GM12878 (cell line): ENCODE measurements at regions of chr13 and their contacts with region 1.

Region 1: DNA sequence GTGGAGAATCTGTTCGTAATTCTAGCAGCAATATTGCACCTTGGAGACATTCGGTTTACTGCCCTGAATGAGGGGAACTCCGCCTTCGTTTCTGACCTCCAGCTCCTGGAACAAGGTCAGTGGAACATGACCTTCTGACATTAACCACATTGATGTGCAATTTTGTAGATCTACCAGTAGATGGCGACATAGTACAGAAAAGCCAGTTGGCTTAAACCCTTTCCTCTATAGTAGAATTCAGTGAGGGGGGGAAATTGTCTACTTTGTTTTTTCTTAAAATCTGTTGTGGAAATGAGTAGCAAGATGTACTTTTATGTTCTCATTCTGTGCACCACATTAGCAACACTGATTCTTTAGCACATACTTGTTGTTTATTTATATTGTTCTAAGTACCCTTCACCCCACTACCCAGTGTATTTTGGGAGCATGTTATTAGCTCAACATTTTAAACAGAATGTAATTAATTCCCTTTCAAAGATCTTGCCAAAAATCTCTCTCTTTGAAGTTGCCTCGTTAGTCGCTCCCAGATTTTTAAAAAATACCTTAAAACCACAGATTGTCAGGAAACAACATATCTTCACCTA is 332.2 kb downstream of the MYO16 start:
- DNase-seq: peak; percentile 24
- ATAC-seq: peak; percentile 97
- H3K4me3 ChIP-seq: no peak overlapping the region
- H3K27ac ChIP-seq: no peak overlapping the region
- H3K4me1 ChIP-seq: no peaks in the 10 kb centered on the region
- H3K27me3 ChIP-seq: no peaks in the 10 kb centered on the region
- CTCF ChIP-seq: peak; percentile 68 to 92 (median 76); a peak in 5 of 6 replicates
- EP300 ChIP-seq: no peak
- POLR2A ChIP-seq: no peak
- RAD21 ChIP-seq: peak; percentile 97

Region 2: GRCh38 chr13:108629181-108629752 is 332.4 kb before region 1 on chr13 and contains the start of gene MYO16:
- CTCF ChIA-PET with region 1: no interaction called
- POLR2A ChIA-PET with region 1: no interaction called
- RAD21 ChIA-PET with region 1: no interaction called
- SMC1A ChIA-PET with region 1: no interaction called
- in situ Hi-C with region 1: no loop called
- intact Hi-C with region 1: no loop called
- DNase-seq: no peak
- ATAC-seq: no peak
- H3K4me3 ChIP-seq: no peak within 1 kb of the TSS
- H3K27ac ChIP-seq: no peak within 1 kb of the TSS
- H3K4me1 ChIP-seq: no peaks in the 10 kb centered on the region
- H3K27me3 ChIP-seq: no peaks in the 10 kb centered on the region
- CTCF ChIP-seq: no peak
- EP300 ChIP-seq: no peak
- POLR2A ChIP-seq: no peak
- RAD21 ChIP-seq: no peak
- polyA plus RNA-seq, gene MYO16: not detected

Region 3: GRCh38 chr13:108915634-108916512 is 45.8 kb before region 1 on chr13:
- CTCF ChIA-PET with region 1: interaction called, 21 read pairs
- POLR2A ChIA-PET with region 1: interaction called, 3 read pairs
- RAD21 ChIA-PET with region 1: interaction called, 14 read pairs
- SMC1A ChIA-PET with region 1: interaction called, 11 read pairs
- in situ Hi-C with region 1: no loop called
- intact Hi-C with region 1: no loop called
- DNase-seq: peak; percentile 52
- ATAC-seq: peak; percentile 93
- H3K4me3 ChIP-seq: peak overlapping the region; percentile 36
- H3K27ac ChIP-seq: peak overlapping the region; percentile 20; the same call in 1 of the 2 replicates
- H3K4me1 ChIP-seq: peaks cover 9% of the 10 kb centered on the region
- H3K27me3 ChIP-seq: no peaks in the 10 kb centered on the region
- CTCF ChIP-seq: no peak
- EP300 ChIP-seq: peak in 1 of 2 experiments; percentile 61; a peak in 2 of 4 replicates
- POLR2A ChIP-seq: 0 out of 2 replicates have a peak, but pooled peaks have one; percentile 38
- RAD21 ChIP-seq: no peak

Region 4: GRCh38 chr13:109131698-109132257 is 170.1 kb after region 1 on chr13:
- CTCF ChIA-PET with region 1: interaction called, 10 read pairs
- POLR2A ChIA-PET with region 1: no interaction called
- RAD21 ChIA-PET with region 1: interaction called, 3 read pairs
- SMC1A ChIA-PET with region 1: interaction called, 4 read pairs
- in situ Hi-C with region 1: no loop called
- intact Hi-C with region 1: loop called (anchors 2 kb)
- DNase-seq: peak; percentile 77
- ATAC-seq: peak; percentile 87
- H3K4me3 ChIP-seq: no peak overlapping the region
- H3K27ac ChIP-seq: peak overlapping the region; percentile 42; the same call in 1 of the 2 replicates
- H3K4me1 ChIP-seq: peaks cover 14% of the 10 kb centered on the region
- H3K27me3 ChIP-seq: no peaks in the 10 kb centered on the region
- CTCF ChIP-seq: no peak
- EP300 ChIP-seq: peak; percentile 51 to 70; a peak in 1 of 4 replicates
- POLR2A ChIP-seq: no peak
- RAD21 ChIP-seq: no peak

Region 5: GRCh38 chr13:109786457-109787134 is 825.0 kb after region 1 on chr13 and contains the start of gene IRS2:
- CTCF ChIA-PET with region 1: interaction called, 10 read pairs
- POLR2A ChIA-PET with region 1: no interaction called
- RAD21 ChIA-PET with region 1: no interaction called
- SMC1A ChIA-PET with region 1: interaction called, 4 read pairs
- in situ Hi-C with region 1: no loop called
- intact Hi-C with region 1: loop called (anchors 2 kb)
- DNase-seq: no peak
- ATAC-seq: peak; percentile 92
- H3K4me3 ChIP-seq: peak within 1 kb of the TSS; percentile 32; the same call in 1 of the 2 replicates
- H3K27ac ChIP-seq: no peak within 1 kb of the TSS
- H3K4me1 ChIP-seq: no peaks in the 10 kb centered on the region
- H3K27me3 ChIP-seq: peaks cover 1 to 3% of the 10 kb centered on the region in 2 experiments; a peak in 3 of 4 replicates
- CTCF ChIP-seq: no peak
- EP300 ChIP-seq: no peak
- POLR2A ChIP-seq: peak; percentile 80
- RAD21 ChIP-seq: no peak
- polyA plus RNA-seq, gene IRS2: 0.03 TPM in 1 of 2 experiments, not detected in the other

Region 6: DNA sequence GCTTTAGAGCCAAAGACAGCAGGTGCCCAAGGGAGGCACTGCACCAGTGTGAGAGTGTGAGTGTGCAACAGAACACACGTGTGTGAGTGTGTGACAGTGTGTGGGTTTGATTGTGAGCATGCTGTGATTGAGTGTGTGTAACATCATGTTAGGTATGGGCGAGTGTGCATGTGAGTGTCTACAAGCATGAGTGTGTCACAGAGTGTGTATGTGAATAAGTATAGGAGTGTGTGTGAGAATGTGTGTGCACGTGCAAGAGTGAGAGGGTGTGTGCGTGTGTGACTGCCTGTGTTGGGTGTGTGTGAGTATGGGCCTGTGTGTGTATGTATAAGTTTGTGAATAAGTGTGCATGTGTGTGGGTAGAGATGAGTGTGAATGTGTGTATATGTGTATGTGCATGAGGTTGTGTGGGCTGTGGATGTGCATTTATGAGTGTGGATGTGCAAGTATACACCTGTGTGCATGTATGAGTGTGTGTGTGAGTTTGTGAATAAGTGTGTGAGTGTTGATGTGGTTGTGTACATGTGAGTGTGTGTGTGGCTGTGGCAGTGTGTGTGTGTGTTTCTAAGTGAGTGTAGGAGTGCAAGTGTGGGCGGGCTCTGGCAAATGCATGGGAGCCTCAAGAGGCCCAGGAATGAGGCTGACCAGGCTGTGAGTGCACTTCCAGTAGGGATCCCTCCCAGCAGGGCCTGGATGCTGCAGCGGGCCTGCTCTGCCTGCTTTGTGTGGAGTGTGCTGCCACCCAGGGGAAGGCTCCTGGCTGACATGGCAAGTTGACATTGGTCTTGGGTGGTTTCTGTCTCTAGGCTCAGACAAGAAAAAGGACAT is 1146.9 kb after region 1 on chr13:
- CTCF ChIA-PET with region 1: interaction called, 18 read pairs
- POLR2A ChIA-PET with region 1: no interaction called
- RAD21 ChIA-PET with region 1: interaction called, 8 read pairs
- SMC1A ChIA-PET with region 1: interaction called, 7 read pairs
- in situ Hi-C with region 1: loop called (anchors 5 kb)
- intact Hi-C with region 1: loop called (anchors 2 kb)
- DNase-seq: no peak
- ATAC-seq: peak; percentile 84
- H3K4me3 ChIP-seq: no peak overlapping the region
- H3K27ac ChIP-seq: no peak overlapping the region
- H3K4me1 ChIP-seq: no peaks in the 10 kb centered on the region; the same call in 1 of the 2 replicates
- H3K27me3 ChIP-seq: no peaks in the 10 kb centered on the region
- CTCF ChIP-seq: peak; percentile 26 to 74 (median 52); a peak in 3 of 6 replicates
- EP300 ChIP-seq: no peak
- POLR2A ChIP-seq: no peak
- RAD21 ChIP-seq: peak; percentile 68

Region 7: GRCh38 chr13:110116072-110116487 is 1154.4 kb after region 1 on chr13:
- CTCF ChIA-PET with region 1: interaction called, 18 read pairs
- POLR2A ChIA-PET with region 1: no interaction called
- RAD21 ChIA-PET with region 1: interaction called, 8 read pairs
- SMC1A ChIA-PET with region 1: interaction called, 7 read pairs
- in situ Hi-C with region 1: loop called (anchors 5 kb)
- intact Hi-C with region 1: loop called (anchors 1 kb)
- DNase-seq: no peak
- ATAC-seq: peak; percentile 85
- H3K4me3 ChIP-seq: no peak overlapping the region
- H3K27ac ChIP-seq: no peak overlapping the region
- H3K4me1 ChIP-seq: no peaks in the 10 kb centered on the region; the same call in 1 of the 2 replicates
- H3K27me3 ChIP-seq: peaks cover 0 to 2% of the 10 kb centered on the region in 2 experiments; a peak in 1 of 4 replicates
- CTCF ChIP-seq: peak; percentile 71 to 98 (median 88)
- EP300 ChIP-seq: no peak
- POLR2A ChIP-seq: no peak
- RAD21 ChIP-seq: peak; percentile 65

Region 8: DNA sequence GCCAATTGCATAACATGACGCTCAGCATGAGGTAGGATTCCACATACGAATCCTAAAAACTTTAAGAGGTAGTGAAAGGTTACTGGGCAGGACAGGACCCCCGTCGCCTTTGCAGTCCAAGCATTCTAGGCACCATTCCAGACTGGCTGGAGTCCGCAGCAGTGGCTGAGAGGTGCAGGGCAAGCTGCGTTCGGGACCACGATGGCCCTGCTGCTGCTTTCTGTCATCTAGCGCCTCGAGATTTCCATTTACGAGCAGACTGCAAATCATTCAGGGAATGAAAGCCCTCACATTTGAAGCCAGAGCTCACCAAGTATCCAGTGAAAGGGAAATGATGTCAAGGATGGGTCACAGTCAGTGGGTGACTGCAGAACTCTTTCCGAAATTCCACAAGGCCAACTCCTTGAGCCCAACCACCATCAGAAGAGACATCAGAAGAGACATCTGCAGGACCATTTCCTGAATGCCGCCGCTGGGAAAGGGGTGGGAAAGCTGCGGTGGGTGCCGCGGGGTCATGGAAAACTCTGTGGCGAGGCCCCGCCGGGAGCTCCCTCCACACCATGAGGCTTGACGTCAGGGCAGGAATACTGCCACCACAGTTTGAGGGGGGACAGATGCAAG is 1257.1 kb after region 1 on chr13:
- CTCF ChIA-PET with region 1: no interaction called
- POLR2A ChIA-PET with region 1: no interaction called
- RAD21 ChIA-PET with region 1: interaction called, 4 read pairs
- SMC1A ChIA-PET with region 1: no interaction called
- in situ Hi-C with region 1: no loop called
- intact Hi-C with region 1: loop called (anchors 5 kb)
- DNase-seq: no peak
- ATAC-seq: no peak
- H3K4me3 ChIP-seq: no peak overlapping the region
- H3K27ac ChIP-seq: no peak overlapping the region
- H3K4me1 ChIP-seq: no peaks in the 10 kb centered on the region
- H3K27me3 ChIP-seq: peaks cover 0 to 3% of the 10 kb centered on the region in 2 experiments; a peak in 2 of 4 replicates
- CTCF ChIP-seq: no peak
- EP300 ChIP-seq: no peak
- POLR2A ChIP-seq: no peak
- RAD21 ChIP-seq: no peak